ENCODE measurements at regions of chr22 and their contacts with region 1.

Region 1: DNA sequence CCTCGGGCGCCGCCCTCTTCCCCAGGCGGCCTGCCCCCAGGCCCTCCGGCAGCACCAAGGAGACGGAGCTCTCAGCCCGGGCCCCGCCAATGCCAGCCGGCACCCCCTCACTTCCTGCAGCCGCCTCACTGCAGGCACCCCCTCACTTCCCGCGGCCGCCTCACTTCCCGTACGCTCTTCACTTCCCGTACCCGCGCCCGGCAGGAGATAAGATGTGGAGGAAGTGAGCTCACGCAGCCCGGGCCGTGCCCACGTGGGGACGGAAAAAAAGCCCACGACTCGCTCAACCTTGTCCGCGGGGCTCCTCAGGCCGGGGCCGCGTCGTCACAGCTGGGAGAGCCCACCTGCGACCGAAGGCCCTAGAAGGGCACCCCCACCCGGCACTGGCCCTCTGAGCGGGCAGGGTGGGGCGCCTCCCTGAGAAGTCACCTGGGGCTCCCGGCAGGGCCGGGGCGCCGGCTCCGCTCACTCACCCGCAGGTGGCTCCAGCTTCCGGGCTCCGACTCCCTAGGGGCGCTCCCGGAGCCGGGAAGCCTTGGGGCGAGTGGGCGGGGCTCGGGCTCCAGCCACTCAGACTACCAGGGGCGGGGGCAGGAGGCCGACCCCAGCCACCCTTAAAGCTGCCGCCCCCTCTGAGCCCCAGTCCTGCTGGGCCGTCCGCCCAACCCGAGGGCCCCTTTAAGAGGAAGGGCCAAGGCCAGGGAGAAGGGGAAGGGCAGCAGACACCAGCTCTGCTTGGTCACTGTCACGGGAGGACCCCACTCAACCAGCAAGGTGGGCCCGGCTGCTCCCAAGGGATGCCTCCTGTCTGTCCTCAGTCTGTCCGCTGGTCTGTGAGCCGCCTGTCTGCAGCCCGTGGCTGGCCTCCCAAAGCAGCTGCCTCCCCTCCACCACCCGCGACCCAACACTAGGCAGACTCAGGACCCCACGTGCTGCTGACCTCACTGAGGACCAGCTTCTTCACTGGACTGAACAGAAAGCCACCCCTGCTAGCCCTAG is 31.4 kb downstream of the PISD start:
- DNase-seq: peak; percentile 83
- ATAC-seq: peak; percentile 80
- H3K4me3 Mint-ChIP-seq: peak overlapping the region; percentile 88
- H3K27ac Mint-ChIP-seq: peak overlapping the region; percentile 95
- H3K4me1 Mint-ChIP-seq: peaks cover 66% of the 10 kb centered on the region
- H3K27me3 Mint-ChIP-seq: no peaks in the 10 kb centered on the region
- CTCF ChIP-seq: no peak

Region 2: GRCh38 chr22:31211862-31212730 is 418.5 kb before region 1 on chr22 and contains the start of gene LIMK2:
- CTCF ChIA-PET with region 1: no interaction called
- POLR2A ChIA-PET with region 1: no interaction called
- intact Hi-C with region 1: loop called (anchors 5 kb)
- DNase-seq: peak; percentile 98
- ATAC-seq: peak; percentile 100
- H3K4me3 Mint-ChIP-seq: peak within 1 kb of the TSS; percentile 90
- H3K27ac Mint-ChIP-seq: peak within 1 kb of the TSS; percentile 79
- H3K4me1 Mint-ChIP-seq: peaks cover 26% of the 10 kb centered on the region
- H3K27me3 Mint-ChIP-seq: no peaks in the 10 kb centered on the region
- CTCF ChIP-seq: peak; percentile 30
- total RNA-seq, gene LIMK2: 15.3 and 17.7 TPM in 2 replicates

Region 3: GRCh38 chr22:31451709-31452571 is 178.7 kb before region 1 on chr22:
- CTCF ChIA-PET with region 1: interaction called, 18 read pairs
- POLR2A ChIA-PET with region 1: interaction called, 4 read pairs
- intact Hi-C with region 1: no loop called
- DNase-seq: no peak
- ATAC-seq: peak; percentile 68
- H3K4me3 Mint-ChIP-seq: no peak overlapping the region
- H3K27ac Mint-ChIP-seq: peak overlapping the region; percentile 53
- H3K4me1 Mint-ChIP-seq: peaks cover 21% of the 10 kb centered on the region
- H3K27me3 Mint-ChIP-seq: no peaks in the 10 kb centered on the region
- CTCF ChIP-seq: no peak

Region 4: DNA sequence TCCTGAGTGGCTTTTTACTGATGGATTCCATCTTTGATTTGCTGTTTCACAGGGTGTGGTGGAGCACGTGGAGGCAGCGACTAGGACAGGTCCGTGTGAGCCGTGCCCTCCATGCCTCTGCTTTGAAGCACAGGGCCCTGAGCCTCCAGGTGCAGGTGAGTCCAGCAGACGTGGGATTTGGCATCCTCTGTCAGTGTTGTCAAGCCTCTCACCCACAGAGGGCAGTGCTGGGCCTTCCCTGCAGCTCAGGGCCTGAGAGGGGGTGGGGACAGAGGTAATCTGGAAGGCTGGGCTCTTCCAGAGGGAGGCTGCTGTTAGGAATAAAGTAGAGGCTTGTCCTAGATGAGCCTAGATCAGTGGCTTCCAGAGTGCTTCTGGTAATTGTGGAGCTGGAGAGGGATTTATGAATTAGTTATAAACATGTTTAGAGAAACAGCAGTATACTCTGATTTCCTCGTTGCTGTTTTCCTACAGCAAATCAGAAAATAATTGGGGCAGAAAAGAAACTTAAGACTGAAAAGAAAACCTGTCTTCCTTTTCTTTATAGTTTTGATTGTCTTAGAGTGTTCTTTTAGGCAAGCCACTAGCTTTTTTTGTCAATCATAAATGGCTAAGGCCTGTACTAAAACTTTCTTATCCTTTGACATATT is 69.3 kb before region 1 on chr22:
- CTCF ChIA-PET with region 1: interaction called, 92 read pairs
- POLR2A ChIA-PET with region 1: interaction called, 19 read pairs
- intact Hi-C with region 1: loop called (anchors 1 kb)
- DNase-seq: peak; percentile 28
- ATAC-seq: peak; percentile 91
- H3K4me3 Mint-ChIP-seq: no peak overlapping the region
- H3K27ac Mint-ChIP-seq: no peak overlapping the region
- H3K4me1 Mint-ChIP-seq: no peaks in the 10 kb centered on the region
- H3K27me3 Mint-ChIP-seq: no peaks in the 10 kb centered on the region
- CTCF ChIP-seq: no peak

Region 5: GRCh38 chr22:31646186-31647089 is 15.8 kb after region 1 on chr22:
- CTCF ChIA-PET with region 1: no interaction called
- POLR2A ChIA-PET with region 1: interaction called, 4 read pairs
- intact Hi-C with region 1: loop called (anchors 2 kb)
- DNase-seq: no peak
- ATAC-seq: peak; percentile 80
- H3K4me3 Mint-ChIP-seq: peak overlapping the region; percentile 32
- H3K27ac Mint-ChIP-seq: peak overlapping the region; percentile 80
- H3K4me1 Mint-ChIP-seq: peaks cover 41% of the 10 kb centered on the region
- H3K27me3 Mint-ChIP-seq: no peaks in the 10 kb centered on the region
- CTCF ChIP-seq: no peak

Region 6: DNA sequence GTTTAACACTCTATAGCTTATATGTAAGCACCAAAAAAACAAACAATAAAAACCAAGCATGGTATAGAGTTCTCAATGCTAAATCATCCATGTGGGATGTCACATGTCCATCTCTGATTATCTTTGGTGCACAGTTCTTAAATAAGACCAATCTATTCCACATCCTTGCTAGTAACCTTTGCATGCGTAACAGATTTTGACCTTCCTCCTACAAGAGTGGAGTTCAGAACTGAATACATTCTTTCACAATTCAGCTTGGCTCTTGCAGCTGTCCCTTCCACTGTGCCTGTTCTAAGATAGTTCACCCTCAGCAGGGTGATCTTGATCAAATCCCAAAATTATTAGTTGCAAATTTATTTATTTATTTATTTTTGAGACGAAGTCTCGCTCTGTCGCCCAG is 98.2 kb after region 1 on chr22:
- CTCF ChIA-PET with region 1: no interaction called
- POLR2A ChIA-PET with region 1: no interaction called
- intact Hi-C with region 1: no loop called
- DNase-seq: no peak
- ATAC-seq: no peak
- H3K4me3 Mint-ChIP-seq: no peak overlapping the region
- H3K27ac Mint-ChIP-seq: no peak overlapping the region
- H3K4me1 Mint-ChIP-seq: peaks cover 11% of the 10 kb centered on the region
- H3K27me3 Mint-ChIP-seq: no peaks in the 10 kb centered on the region
- CTCF ChIP-seq: no peak

Region 7: DNA sequence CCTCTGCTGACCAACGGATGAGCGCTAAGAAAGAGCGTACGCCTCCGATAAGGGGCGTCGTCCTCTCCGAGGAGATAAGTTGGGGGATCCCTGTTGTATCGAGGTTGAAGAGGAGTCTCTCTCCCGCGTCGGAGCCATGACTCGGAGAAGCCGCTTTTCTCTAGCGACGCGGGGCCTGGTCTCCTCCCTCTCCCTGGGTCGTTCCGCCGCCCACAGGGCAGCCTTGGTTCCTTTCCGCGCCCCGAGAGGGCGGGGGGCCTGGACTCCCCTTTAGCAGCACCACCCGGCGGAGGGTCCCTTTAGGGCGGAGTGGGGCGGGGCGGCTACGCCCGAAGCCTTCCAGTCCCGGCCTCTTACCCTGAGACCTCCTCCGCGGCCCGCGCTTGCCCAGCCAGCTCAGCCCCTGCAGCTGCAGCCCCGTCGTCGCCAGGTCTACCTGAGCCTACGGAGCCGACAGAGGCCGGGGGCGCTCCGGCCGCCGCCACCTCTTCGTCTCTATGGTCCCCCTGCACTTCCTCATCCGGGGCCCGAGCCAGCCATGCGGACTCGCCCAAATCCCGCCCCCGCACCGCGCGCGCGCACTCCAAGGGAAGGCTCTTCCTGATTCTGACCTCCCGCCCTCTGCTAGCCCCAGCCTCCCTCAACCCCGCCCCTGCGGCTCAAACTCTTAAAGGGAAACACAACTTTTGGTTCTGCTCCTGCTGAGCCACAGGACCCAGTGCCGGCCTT is 119.2 kb after region 1 on chr22 and contains the start of gene PRR14L:
- CTCF ChIA-PET with region 1: no interaction called
- POLR2A ChIA-PET with region 1: interaction called, 9 read pairs
- intact Hi-C with region 1: loop called (anchors 1 kb)
- DNase-seq: peak; percentile 100
- ATAC-seq: peak; percentile 73
- H3K4me3 Mint-ChIP-seq: peak within 1 kb of the TSS; percentile 92
- H3K27ac Mint-ChIP-seq: peak within 1 kb of the TSS; percentile 96
- H3K4me1 Mint-ChIP-seq: peaks cover 52% of the 10 kb centered on the region
- H3K27me3 Mint-ChIP-seq: no peaks in the 10 kb centered on the region
- CTCF ChIP-seq: no peak
- total RNA-seq, gene PRR14L: 49.7 and 59.5 TPM in 2 replicates

Measured in activated B cell treated with CpG ODN at 0.5 μM for 24 hours (primary cell).